WTC11 (cell line): ENCODE measurements at regions of chr3 and their contacts with region 1.

Region 1: DNA sequence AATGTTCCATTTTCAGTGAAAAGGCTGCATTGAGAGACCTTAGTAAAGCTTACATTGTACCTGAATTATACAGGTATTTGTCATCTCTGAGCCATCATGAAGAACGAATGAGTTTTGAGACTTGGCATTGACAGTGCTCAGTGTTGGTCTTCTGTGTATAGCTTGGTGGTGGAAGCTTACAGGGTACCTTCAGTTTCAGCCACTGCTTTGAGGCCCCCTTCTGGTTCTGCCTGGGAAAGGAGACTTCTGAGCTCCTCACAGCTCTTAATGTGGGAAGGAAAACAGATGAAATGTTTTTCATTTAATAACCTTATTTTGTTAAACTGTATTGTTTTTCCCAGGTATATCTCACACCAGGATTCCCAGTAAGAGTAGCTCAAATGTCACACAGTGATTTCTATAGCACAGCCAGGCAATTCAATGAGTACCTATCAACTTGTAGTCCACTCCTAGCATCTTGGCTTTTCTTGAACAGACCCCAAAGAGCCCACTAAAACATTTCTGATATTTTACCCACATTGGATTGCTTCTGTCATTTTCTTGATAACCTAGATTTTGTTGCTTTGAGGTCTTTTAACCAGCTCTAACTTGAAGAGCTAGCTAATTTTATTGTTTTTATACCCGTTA is 5.6 kb downstream of the SERPINI1 start:
- DNase-seq: peak; percentile 49
- ATAC-seq: peak; percentile 100
- H3K4me3 Mint-ChIP-seq: no peak overlapping the region
- H3K27ac Mint-ChIP-seq: no peak overlapping the region
- H3K4me1 Mint-ChIP-seq: peaks cover 23% of the 10 kb centered on the region
- H3K27me3 Mint-ChIP-seq: no peaks in the 10 kb centered on the region
- CTCF ChIP-seq: no peak

Region 2: GRCh38 chr3:167684388-167684993 is 56.6 kb before region 1 on chr3:
- CTCF ChIA-PET with region 1: interaction called, 12 read pairs
- POLR2A ChIA-PET with region 1: no interaction called
- DNase-seq: peak; percentile 23
- ATAC-seq: peak; percentile 82
- H3K4me3 Mint-ChIP-seq: no peak overlapping the region
- H3K27ac Mint-ChIP-seq: no peak overlapping the region
- H3K4me1 Mint-ChIP-seq: peaks cover 12% of the 10 kb centered on the region
- H3K27me3 Mint-ChIP-seq: no peaks in the 10 kb centered on the region
- CTCF ChIP-seq: peak; percentile 70

Region 3: GRCh38 chr3:167882067-167882667 is 141.1 kb after region 1 on chr3:
- CTCF ChIA-PET with region 1: interaction called, 10 read pairs
- POLR2A ChIA-PET with region 1: no interaction called
- DNase-seq: no peak
- ATAC-seq: peak; percentile 49; the same call in 1 of the 2 replicates
- H3K4me3 Mint-ChIP-seq: no peak overlapping the region
- H3K27ac Mint-ChIP-seq: no peak overlapping the region
- H3K4me1 Mint-ChIP-seq: no peaks in the 10 kb centered on the region
- H3K27me3 Mint-ChIP-seq: no peaks in the 10 kb centered on the region
- CTCF ChIP-seq: peak; percentile 44